CD14-positive monocyte (primary cell): ENCODE measurements at regions of chr10 and their contacts with region 1.

Region 1: GRCh38 chr10:88424881-88425280 is 158.2 kb downstream of the RNLS start:
- DNase-seq: no peak
- H3K4me3 ChIP-seq: no peak overlapping the region
- H3K4me3 Mint-ChIP-seq: no peak overlapping the region
- H3K27ac ChIP-seq: no peak overlapping the region
- H3K27ac Mint-ChIP-seq: no peak overlapping the region
- H3K4me1 ChIP-seq: no peaks in the 10 kb centered on the region
- H3K4me1 Mint-ChIP-seq: peaks cover 3% of the 10 kb centered on the region
- H3K27me3 ChIP-seq: no peaks in the 10 kb centered on the region
- H3K27me3 Mint-ChIP-seq: peaks cover 0 to 2% (median 0%) of the 10 kb centered on the region in 3 donors
- CTCF ChIP-seq: no peak

Region 2: GRCh38 chr10:88490231-88490980 is 65.5 kb after region 1 on chr10:
- intact Hi-C with region 1: loop called in 1 of 2 experiments (anchors 2 kb)
- DNase-seq: no peak
- H3K4me3 ChIP-seq: no peak overlapping the region
- H3K4me3 Mint-ChIP-seq: no peak overlapping the region
- H3K27ac ChIP-seq: no peak overlapping the region
- H3K27ac Mint-ChIP-seq: no peak overlapping the region
- H3K4me1 ChIP-seq: peaks cover 25 to 36% of the 10 kb centered on the region in 2 donors
- H3K4me1 Mint-ChIP-seq: peaks cover 36% of the 10 kb centered on the region
- H3K27me3 ChIP-seq: no peaks in the 10 kb centered on the region
- H3K27me3 Mint-ChIP-seq: no peaks in the 10 kb centered on the region
- CTCF ChIP-seq: no peak